ENCODE measurements at regions of chr4 and their contacts with region 1.

Region 1: GRCh38 chr4:74623041-74623440 is 171.3 kb downstream of the BTC start:
- DNase-seq: peak; percentile 82
- ATAC-seq: peak; percentile 37
- H3K4me3 ChIP-seq: no peak overlapping the region
- H3K27ac ChIP-seq: peak overlapping the region; percentile 94
- H3K4me1 ChIP-seq: peaks cover 89 to 99% of the 10 kb centered on the region in 2 experiments
- H3K27me3 ChIP-seq: no peaks in the 10 kb centered on the region
- CTCF ChIP-seq: peak in 2 of 3 experiments; percentile 57 to 81; a peak in 4 of 6 replicates
- POLR2A ChIP-seq: no peak
- RAD21 ChIP-seq: no peak

Region 2: DNA sequence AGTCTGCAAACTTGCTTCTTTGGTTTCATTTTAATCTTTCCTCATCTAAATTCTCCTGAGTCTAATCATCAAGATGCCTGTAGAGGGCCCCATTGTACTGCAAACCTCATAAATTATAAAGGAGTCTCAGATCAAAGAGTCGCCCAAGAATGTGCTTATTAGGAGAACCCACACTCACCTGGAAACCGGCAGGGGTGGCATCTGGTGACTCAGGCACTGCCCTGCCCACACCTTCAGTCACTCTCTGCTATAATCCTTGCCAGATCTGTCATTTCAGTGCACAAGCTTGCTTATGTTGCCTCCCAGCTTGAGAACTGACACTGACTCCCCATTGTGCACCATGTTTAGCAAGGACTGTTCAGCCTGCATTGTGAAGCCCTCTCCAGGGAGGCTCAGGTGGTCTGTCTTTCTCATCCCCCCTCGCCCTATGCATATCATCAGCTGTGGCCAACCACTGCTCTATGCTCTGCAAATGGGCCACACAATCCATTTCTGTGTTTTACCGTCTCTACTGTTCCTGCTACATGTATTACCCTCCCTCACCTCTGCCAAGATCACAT is 302.4 kb before region 1 on chr4:
- CTCF ChIA-PET with region 1: interaction called, 11 read pairs
- POLR2A ChIA-PET with region 1: interaction called, 5 read pairs
- RAD21 ChIA-PET with region 1: interaction called in 1 of 2 experiments, 3 read pairs
- intact Hi-C with region 1: loop called (anchors 1 kb)
- DNase-seq: peak; percentile 98
- ATAC-seq: peak; percentile 95
- H3K4me3 ChIP-seq: peak overlapping the region; percentile 10 to 41; a peak in 3 of 4 replicates
- H3K27ac ChIP-seq: peak overlapping the region; percentile 58
- H3K4me1 ChIP-seq: peaks cover 29 to 61% of the 10 kb centered on the region in 2 experiments
- H3K27me3 ChIP-seq: no peaks in the 10 kb centered on the region
- CTCF ChIP-seq: peak; percentile 59 to 86 (median 71)
- POLR2A ChIP-seq: no peak
- RAD21 ChIP-seq: peak; percentile 96

Region 3: GRCh38 chr4:74376888-74377483 is 246.1 kb before region 1 on chr4:
- CTCF ChIA-PET with region 1: interaction called, 6 read pairs
- POLR2A ChIA-PET with region 1: interaction called, 3 read pairs
- RAD21 ChIA-PET with region 1: interaction called in 1 of 2 experiments, 3 read pairs
- intact Hi-C with region 1: loop called (anchors 5 kb)
- DNase-seq: no peak
- ATAC-seq: no peak
- H3K4me3 ChIP-seq: no peak overlapping the region
- H3K27ac ChIP-seq: peak overlapping the region; percentile 94
- H3K4me1 ChIP-seq: peaks cover 53 to 86% of the 10 kb centered on the region in 2 experiments
- H3K27me3 ChIP-seq: no peaks in the 10 kb centered on the region
- CTCF ChIP-seq: peak in 2 of 3 experiments; percentile 57 to 62; a peak in 4 of 6 replicates
- POLR2A ChIP-seq: no peak
- RAD21 ChIP-seq: peak; percentile 76

Region 4: DNA sequence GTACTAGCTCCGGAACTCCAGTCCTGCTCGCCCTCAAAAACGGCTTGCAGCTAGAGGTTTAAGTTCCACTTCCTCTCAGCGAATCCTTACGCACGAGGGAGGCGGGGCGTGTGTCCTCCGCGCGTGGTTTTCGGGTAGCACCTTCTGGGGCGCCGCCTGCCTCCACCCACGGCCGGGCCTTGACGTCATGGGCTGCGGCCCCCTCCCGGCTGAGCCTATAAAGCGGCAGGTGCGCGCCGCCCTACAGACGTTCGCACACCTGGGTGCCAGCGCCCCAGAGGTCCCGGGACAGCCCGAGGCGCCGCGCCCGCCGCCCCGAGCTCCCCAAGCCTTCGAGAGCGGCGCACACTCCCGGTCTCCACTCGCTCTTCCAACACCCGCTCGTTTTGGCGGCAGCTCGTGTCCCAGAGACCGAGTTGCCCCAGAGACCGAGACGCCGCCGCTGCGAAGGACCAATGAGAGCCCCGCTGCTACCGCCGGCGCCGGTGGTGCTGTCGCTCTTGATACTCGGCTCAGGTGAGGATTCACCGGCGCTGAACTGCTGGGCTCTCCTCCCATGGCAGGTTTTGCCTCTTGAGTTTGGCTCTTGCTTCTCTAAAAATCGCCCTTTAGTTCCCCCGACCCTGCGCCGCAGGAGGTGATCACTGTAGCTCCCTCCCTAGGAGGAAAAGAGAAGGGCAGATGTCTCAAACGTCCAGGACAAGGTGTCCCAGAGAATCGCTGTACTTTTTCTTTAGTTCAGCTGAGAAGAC is 178.0 kb before region 1 on chr4 and contains the start of gene AREG:
- CTCF ChIA-PET with region 1: no interaction called
- POLR2A ChIA-PET with region 1: interaction called, 19 read pairs
- RAD21 ChIA-PET with region 1: no interaction called
- intact Hi-C with region 1: no loop called
- DNase-seq: peak; percentile 83
- ATAC-seq: peak; percentile 85
- H3K4me3 ChIP-seq: peak within 1 kb of the TSS; percentile 65 to 79
- H3K27ac ChIP-seq: peak within 1 kb of the TSS; percentile 85
- H3K4me1 ChIP-seq: peaks cover 40 to 53% of the 10 kb centered on the region in 2 experiments
- H3K27me3 ChIP-seq: no peaks in the 10 kb centered on the region
- CTCF ChIP-seq: peak; percentile 8 to 59 (median 51); a peak in 4 of 6 replicates
- POLR2A ChIP-seq: peak; percentile 72
- RAD21 ChIP-seq: peak; percentile 23
- total RNA-seq, gene AREG: 739 TPM

Region 5: GRCh38 chr4:74480288-74480687 is 142.8 kb before region 1 on chr4:
- CTCF ChIA-PET with region 1: no interaction called
- POLR2A ChIA-PET with region 1: no interaction called
- RAD21 ChIA-PET with region 1: no interaction called
- intact Hi-C with region 1: no loop called
- DNase-seq: no peak
- ATAC-seq: no peak
- H3K4me3 ChIP-seq: no peak overlapping the region
- H3K27ac ChIP-seq: no peak overlapping the region
- H3K4me1 ChIP-seq: no peaks in the 10 kb centered on the region
- H3K27me3 ChIP-seq: no peaks in the 10 kb centered on the region
- CTCF ChIP-seq: no peak
- POLR2A ChIP-seq: no peak
- RAD21 ChIP-seq: no peak

Region 6: GRCh38 chr4:74531963-74532794 is 90.9 kb before region 1 on chr4:
- CTCF ChIA-PET with region 1: interaction called, 5 read pairs
- POLR2A ChIA-PET with region 1: interaction called, 14 read pairs
- RAD21 ChIA-PET with region 1: no interaction called
- intact Hi-C with region 1: no loop called
- DNase-seq: peak; percentile 92
- ATAC-seq: peak; percentile 86
- H3K4me3 ChIP-seq: no peak overlapping the region
- H3K27ac ChIP-seq: peak overlapping the region; percentile 37; the same call in 1 of the 2 replicates
- H3K4me1 ChIP-seq: peaks cover 54 to 79% of the 10 kb centered on the region in 2 experiments
- H3K27me3 ChIP-seq: no peaks in the 10 kb centered on the region
- CTCF ChIP-seq: peak; percentile 59 to 98 (median 69)
- POLR2A ChIP-seq: no peak
- RAD21 ChIP-seq: peak; percentile 95

Region 7: GRCh38 chr4:74654230-74654681 is 31.2 kb after region 1 on chr4:
- CTCF ChIA-PET with region 1: interaction called, 5 read pairs
- POLR2A ChIA-PET with region 1: interaction called, 65 read pairs
- RAD21 ChIA-PET with region 1: no interaction called
- intact Hi-C with region 1: loop called (anchors 1 kb)
- DNase-seq: peak; percentile 96
- ATAC-seq: peak; percentile 78
- H3K4me3 ChIP-seq: peak overlapping the region; percentile 1 to 14; a peak in 2 of 4 replicates
- H3K27ac ChIP-seq: peak overlapping the region; percentile 93
- H3K4me1 ChIP-seq: peaks cover 60 to 92% of the 10 kb centered on the region in 2 experiments
- H3K27me3 ChIP-seq: no peaks in the 10 kb centered on the region
- CTCF ChIP-seq: no peak
- POLR2A ChIP-seq: peak; percentile 10
- RAD21 ChIP-seq: no peak

Region 8: DNA sequence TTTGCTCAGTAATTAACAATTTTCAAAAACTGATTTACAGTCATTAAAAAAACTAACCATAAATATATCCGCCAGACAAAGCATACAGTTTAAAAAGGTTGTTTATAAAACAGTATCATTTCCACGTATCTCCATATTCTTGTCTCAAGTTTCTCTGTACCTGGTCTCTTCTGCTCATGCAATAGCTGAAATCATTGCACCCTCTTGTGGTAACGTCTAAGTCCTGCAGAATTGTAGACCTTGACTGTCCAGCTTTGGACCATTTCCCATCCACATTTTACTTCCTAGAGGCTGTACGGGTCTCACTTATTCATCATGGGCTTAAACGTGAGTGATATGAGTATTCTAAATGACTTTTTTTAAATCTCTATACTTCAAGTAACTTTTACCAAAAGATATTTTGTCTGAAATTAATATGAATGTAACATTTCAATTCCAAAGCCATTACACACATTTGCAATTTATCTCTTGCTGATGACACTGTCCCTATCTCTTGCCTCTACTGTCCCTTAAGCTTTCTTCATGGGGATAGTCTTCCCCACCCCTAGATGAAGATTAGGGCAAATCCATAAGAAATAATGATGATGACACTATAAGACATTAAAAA is 52.7 kb after region 1 on chr4:
- CTCF ChIA-PET with region 1: interaction called, 15 read pairs
- POLR2A ChIA-PET with region 1: interaction called, 4 read pairs
- RAD21 ChIA-PET with region 1: interaction called in 1 of 2 experiments, 3 read pairs
- intact Hi-C with region 1: loop called (anchors 1 kb)
- DNase-seq: peak; percentile 80
- ATAC-seq: peak; percentile 90
- H3K4me3 ChIP-seq: no peak overlapping the region
- H3K27ac ChIP-seq: no peak overlapping the region
- H3K4me1 ChIP-seq: peaks cover 7 to 33% of the 10 kb centered on the region in 2 experiments; a peak in 3 of 4 replicates
- H3K27me3 ChIP-seq: no peaks in the 10 kb centered on the region
- CTCF ChIP-seq: peak; percentile 78 to 90 (median 80)
- POLR2A ChIP-seq: no peak
- RAD21 ChIP-seq: peak; percentile 97

Region 9: GRCh38 chr4:74716436-74716765 is 93.4 kb after region 1 on chr4:
- CTCF ChIA-PET with region 1: no interaction called
- POLR2A ChIA-PET with region 1: no interaction called
- RAD21 ChIA-PET with region 1: no interaction called
- intact Hi-C with region 1: no loop called
- DNase-seq: no peak
- ATAC-seq: no peak
- H3K4me3 ChIP-seq: no peak overlapping the region
- H3K27ac ChIP-seq: no peak overlapping the region
- H3K4me1 ChIP-seq: no peaks in the 10 kb centered on the region
- H3K27me3 ChIP-seq: no peaks in the 10 kb centered on the region
- CTCF ChIP-seq: no peak
- POLR2A ChIP-seq: no peak
- RAD21 ChIP-seq: no peak

Region 10: DNA sequence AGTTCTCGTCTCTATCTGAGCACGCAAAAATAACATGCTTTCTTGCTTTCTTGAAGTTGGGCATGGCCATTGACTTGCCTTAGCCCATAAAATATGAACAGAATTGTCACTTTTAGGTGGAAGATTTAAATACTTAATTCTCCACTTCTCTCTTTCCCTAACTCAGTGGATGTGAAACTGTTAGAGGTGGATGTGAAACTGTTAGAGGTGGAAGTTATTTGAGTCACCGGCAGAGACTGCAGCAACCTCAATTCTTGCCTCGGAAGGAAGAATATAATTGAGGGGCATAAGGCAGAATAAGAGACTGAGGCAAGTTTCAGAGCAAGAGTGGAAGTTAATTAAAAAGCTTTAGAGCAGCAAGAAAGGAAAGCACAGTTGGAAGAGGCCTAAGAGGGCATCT is 307.1 kb after region 1 on chr4:
- CTCF ChIA-PET with region 1: no interaction called
- POLR2A ChIA-PET with region 1: no interaction called
- RAD21 ChIA-PET with region 1: no interaction called
- intact Hi-C with region 1: no loop called
- DNase-seq: no peak
- ATAC-seq: no peak
- H3K4me3 ChIP-seq: no peak overlapping the region
- H3K27ac ChIP-seq: no peak overlapping the region
- H3K4me1 ChIP-seq: peaks cover 0 to 17% of the 10 kb centered on the region in 2 experiments; a peak in 1 of 4 replicates
- H3K27me3 ChIP-seq: no peaks in the 10 kb centered on the region
- CTCF ChIP-seq: no peak
- POLR2A ChIP-seq: no peak
- RAD21 ChIP-seq: no peak